A549 (cell line): ENCODE measurements at regions of chr3 and their contacts with region 1.

Region 1: DNA sequence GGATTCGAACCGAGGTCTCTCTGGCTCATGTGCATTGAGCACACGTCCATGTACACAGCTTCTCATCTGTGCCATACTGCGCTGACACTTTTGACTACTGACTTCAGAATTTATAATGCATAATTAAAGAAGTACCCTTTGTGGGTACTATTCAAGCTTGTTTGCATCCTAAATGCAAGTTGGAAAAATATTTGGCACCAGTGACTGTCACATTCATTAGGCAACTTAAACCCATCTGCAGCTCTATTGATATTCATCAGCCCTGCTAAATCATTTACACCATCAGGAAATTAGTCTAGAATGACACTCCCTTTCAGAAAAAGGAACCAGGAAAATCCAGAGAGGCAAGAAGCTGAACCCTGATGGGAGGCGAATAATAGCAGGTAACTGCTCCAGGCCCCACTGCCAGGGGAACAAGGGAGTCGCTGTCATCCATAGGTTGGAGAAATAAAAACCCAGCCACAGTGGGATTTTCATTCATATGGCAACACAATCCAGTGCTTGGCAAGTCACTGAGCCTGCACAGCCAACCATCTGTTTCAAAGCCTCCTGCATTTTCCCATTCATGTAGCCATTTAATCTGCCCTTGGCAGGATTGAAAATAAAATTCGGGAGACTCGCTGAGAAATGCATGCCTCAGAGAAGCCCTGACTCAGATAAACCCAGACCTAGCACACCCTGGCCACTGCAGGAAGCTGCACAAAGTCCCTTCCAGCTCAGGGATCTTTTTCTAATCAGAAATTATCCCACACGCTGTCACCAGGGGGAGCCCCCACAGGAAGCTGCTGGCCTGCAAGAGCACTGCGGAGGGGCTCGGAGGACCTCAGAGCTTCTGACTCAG is 103.0 kb upstream of the VEPH1 start:
- DNase-seq: peak; percentile 64 to 70
- ATAC-seq: peak; percentile 94 to 99
- H3K4me3 ChIP-seq: no peak overlapping the region
- H3K27ac ChIP-seq: no peak overlapping the region
- H3K4me1 ChIP-seq: no peaks in the 10 kb centered on the region
- CTCF ChIP-seq: peak; percentile 66
- EP300 ChIP-seq: no peak
- POLR2A ChIP-seq: no peak
- RAD21 ChIP-seq: peak; percentile 48 to 57; a peak in 4 of 5 replicates

Region 2: DNA sequence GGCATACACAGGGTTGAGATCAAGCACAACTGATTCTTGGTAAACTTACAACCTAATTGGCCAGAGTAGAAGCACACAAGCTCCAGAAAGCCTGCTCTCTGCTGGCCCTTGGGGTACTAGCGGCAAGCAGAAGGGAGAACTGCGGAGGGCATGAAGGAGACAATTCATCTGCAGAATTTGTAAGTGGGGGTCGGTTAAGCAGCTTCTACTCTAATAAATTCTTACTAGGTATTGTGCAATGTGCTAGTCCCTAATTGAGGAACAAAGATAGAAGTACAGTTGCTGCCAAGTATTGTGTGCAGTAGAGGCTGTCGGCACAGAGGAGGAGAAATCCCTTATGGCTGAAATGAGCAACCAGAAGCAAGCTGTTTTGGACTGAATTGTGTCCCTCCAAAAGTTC is 11.8 kb before region 1 on chr3:
- CTCF ChIA-PET with region 1: interaction called, 18 read pairs
- POLR2A ChIA-PET with region 1: no interaction called
- DNase-seq: no peak
- ATAC-seq: peak in 1 of 2 experiments; percentile 42; a peak in 1 of 6 replicates
- H3K4me3 ChIP-seq: no peak overlapping the region
- H3K27ac ChIP-seq: no peak overlapping the region
- H3K4me1 ChIP-seq: no peaks in the 10 kb centered on the region
- CTCF ChIP-seq: no peak
- EP300 ChIP-seq: no peak
- POLR2A ChIP-seq: no peak
- RAD21 ChIP-seq: no peak

Region 3: DNA sequence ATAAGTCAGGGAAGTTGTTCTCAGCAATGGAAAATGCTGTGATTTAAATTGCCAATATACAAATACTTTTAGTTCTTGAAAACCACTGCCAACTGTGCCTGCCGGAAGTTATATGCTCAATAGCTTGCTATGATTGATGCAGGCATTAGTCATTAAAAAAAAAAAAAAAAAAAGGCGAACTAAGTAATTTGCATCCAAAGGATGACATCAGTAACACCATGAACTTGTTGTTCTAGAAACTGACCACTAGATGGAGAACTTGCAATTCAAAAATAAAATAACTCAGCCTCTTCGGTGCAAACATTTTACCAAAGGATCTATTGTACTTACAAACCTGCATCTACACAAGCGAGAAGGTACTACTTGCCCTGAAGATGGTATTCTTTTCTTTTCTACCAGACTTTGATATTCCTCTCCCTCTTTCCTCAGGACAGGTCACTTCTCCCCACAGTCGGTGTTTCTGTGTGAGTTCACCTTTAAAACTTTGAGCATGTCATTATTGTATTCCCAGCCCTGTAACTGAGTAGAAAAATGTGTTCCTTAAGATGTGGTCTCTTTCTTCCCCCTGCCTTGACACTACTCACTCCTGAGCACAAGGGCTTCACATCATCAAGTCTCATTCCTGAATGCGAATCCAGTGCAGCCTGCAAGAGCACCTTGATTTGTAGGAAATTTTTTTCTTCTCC is 12.0 kb after region 1 on chr3:
- CTCF ChIA-PET with region 1: interaction called, 21 read pairs
- POLR2A ChIA-PET with region 1: no interaction called
- DNase-seq: peak; percentile 37 to 56
- ATAC-seq: peak; percentile 45 to 72; a peak in 5 of 6 replicates
- H3K4me3 ChIP-seq: 0 out of 3 replicates have a peak overlapping the region, but pooled peaks have one; percentile 16
- H3K27ac ChIP-seq: no peak overlapping the region
- H3K4me1 ChIP-seq: peaks cover 3% of the 10 kb centered on the region; the same call in 2 of the 3 replicates
- CTCF ChIP-seq: peak; percentile 86
- EP300 ChIP-seq: no peak
- POLR2A ChIP-seq: no peak
- RAD21 ChIP-seq: peak; percentile 74 to 83

Region 4: GRCh38 chr3:157700408-157700807 is 94.2 kb after region 1 on chr3:
- CTCF ChIA-PET with region 1: no interaction called
- POLR2A ChIA-PET with region 1: no interaction called
- DNase-seq: peak in 1 of 2 experiments; percentile 17
- ATAC-seq: peak in 1 of 2 experiments; percentile 51; a peak in 2 of 6 replicates
- H3K4me3 ChIP-seq: no peak overlapping the region
- H3K27ac ChIP-seq: no peak overlapping the region
- H3K4me1 ChIP-seq: no peaks in the 10 kb centered on the region
- CTCF ChIP-seq: no peak
- EP300 ChIP-seq: no peak
- POLR2A ChIP-seq: no peak
- RAD21 ChIP-seq: no peak

Region 5: DNA sequence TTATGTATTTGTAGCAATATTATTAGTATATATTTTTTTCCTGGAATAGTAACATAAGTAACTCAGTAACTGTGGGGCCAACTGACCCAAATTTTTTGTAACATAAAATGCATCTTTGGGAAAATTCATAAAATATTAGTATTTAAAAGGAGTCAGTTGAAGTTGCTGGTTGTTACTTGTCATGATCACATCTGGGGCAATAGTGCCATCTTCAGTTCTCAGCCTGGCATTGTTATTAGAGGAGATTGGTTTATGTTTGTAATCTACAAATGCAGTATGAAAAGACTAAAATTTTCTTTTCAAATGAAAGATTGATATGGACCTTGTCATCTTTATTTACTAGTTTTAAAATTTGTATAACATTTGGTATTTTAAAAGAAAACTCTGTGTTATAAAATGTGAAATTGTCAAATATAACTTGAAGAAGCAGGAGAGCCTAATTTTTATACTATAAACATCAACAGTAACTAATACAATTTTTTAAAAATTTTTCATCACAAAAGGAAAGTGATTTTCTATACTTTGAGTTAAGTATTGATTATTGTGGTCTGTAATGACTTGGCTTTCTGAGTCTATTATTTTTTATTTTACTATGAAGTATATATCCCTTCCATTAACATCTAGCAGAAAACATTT is 926.0 kb after region 1 on chr3:
- CTCF ChIA-PET with region 1: interaction called, 18 read pairs
- POLR2A ChIA-PET with region 1: no interaction called
- DNase-seq: peak; percentile 23 to 71
- ATAC-seq: peak; percentile 59 to 60; a peak in 1 of 6 replicates
- H3K4me3 ChIP-seq: no peak overlapping the region
- H3K27ac ChIP-seq: no peak overlapping the region
- H3K4me1 ChIP-seq: no peaks in the 10 kb centered on the region
- CTCF ChIP-seq: peak; percentile 83
- EP300 ChIP-seq: no peak
- POLR2A ChIP-seq: no peak
- RAD21 ChIP-seq: peak; percentile 83 to 87